ENCODE measurements at regions of chr4 and their contacts with region 1.

Region 1: DNA sequence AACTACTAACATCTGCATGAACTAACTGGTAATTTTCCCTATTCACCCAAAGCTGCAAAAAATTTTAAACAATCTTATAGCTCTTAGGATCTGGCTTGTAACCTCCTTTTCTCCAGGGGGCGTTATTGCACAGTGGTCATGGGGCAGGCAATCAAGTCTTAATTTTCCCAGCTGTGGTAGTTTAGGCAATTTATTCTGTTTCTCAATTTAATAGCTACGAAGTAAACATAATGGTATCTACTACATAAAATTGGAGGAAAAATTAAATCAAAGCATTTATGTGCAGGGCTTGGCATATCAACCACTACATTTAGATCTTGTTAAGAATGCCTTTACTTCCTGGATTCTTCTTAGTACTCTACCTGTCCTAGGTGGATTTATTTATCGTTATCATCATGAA is 137.4 kb upstream of the GUCY1A1 start:
- DNase-seq: no peak
- H3K4me3 ChIP-seq: no peak overlapping the region
- H3K27ac ChIP-seq: no peak overlapping the region
- H3K4me1 ChIP-seq: peaks cover 0 to 44% (median 8%) of the 10 kb centered on the region in 4 donors
- H3K27me3 ChIP-seq: no peaks in the 10 kb centered on the region
- CTCF ChIP-seq: peak in 1 of 5 experiments; percentile 10
- EP300 ChIP-seq: no peak
- POLR2A ChIP-seq: no peak

Region 2: GRCh38 chr4:155497306-155497705 is 32.0 kb before region 1 on chr4:
- in situ Hi-C with region 1: no loop called
- intact Hi-C with region 1: no loop called
- DNase-seq: no peak
- H3K4me3 ChIP-seq: no peak overlapping the region
- H3K27ac ChIP-seq: no peak overlapping the region
- H3K4me1 ChIP-seq: no peaks in the 10 kb centered on the region
- H3K27me3 ChIP-seq: no peaks in the 10 kb centered on the region
- CTCF ChIP-seq: no peak
- EP300 ChIP-seq: no peak
- POLR2A ChIP-seq: no peak

Region 3: GRCh38 chr4:155667568-155668511 is 138.6 kb after region 1 on chr4:
- in situ Hi-C with region 1: loop called in 1 of 4 experiments (anchors 10 kb)
- intact Hi-C with region 1: loop called (anchors 10 kb)
- DNase-seq: peak; percentile 35
- H3K4me3 ChIP-seq: peak overlapping the region; percentile 46 to 66 (median 52)
- H3K27ac ChIP-seq: peak overlapping the region; percentile 83 to 94 (median 86)
- H3K4me1 ChIP-seq: peaks cover 0 to 5% (median 3%) of the 10 kb centered on the region in 4 donors
- H3K27me3 ChIP-seq: peaks cover 34% of the 10 kb centered on the region
- CTCF ChIP-seq: no peak
- EP300 ChIP-seq: no peak
- POLR2A ChIP-seq: no peak

Measured in transverse colon (tissue), 4 donors.